GM13977 (cell line): ENCODE measurements at regions of chr4 and their contacts with region 1.

Region 1: GRCh38 chr4:88533937-88534750 is 10.6 kb upstream of the PYURF start:
- DNase-seq: no peak
- CTCF ChIP-seq: no peak

Region 2: DNA sequence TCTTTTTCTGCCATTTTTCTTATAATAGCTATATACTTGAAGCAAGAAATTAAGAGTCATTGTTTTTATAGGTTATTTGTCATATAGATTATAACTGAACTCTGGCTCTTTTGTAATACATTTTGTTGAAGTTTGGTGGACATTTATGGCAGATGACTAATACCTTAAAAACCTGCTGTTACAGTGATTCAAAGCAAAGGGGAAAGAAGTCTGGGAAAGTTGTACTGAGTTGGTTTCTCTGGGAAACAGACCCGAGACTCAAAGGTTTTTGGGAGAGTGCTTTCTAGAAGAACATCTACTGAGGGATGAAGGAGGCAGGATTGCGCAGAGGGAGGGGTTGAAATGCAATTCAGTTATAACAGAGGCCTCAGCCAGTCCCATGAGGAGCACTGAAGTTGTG is 127.6 kb after region 1 on chr4:
- in situ Hi-C with region 1: loop called (anchors 5 kb)
- DNase-seq: no peak
- CTCF ChIP-seq: no peak